OCI-LY7 (cell line): ENCODE measurements at regions of chr1 and their contacts with region 1.

Region 1: GRCh38 chr1:18597160-18598042 is 33.2 kb upstream of the PAX7 start:
- DNase-seq: peak; percentile 51
- H3K4me3 ChIP-seq: no peak overlapping the region
- H3K27ac ChIP-seq: no peak overlapping the region
- H3K4me1 ChIP-seq: no peaks in the 10 kb centered on the region
- CTCF ChIP-seq: peak; percentile 95

Region 2: DNA sequence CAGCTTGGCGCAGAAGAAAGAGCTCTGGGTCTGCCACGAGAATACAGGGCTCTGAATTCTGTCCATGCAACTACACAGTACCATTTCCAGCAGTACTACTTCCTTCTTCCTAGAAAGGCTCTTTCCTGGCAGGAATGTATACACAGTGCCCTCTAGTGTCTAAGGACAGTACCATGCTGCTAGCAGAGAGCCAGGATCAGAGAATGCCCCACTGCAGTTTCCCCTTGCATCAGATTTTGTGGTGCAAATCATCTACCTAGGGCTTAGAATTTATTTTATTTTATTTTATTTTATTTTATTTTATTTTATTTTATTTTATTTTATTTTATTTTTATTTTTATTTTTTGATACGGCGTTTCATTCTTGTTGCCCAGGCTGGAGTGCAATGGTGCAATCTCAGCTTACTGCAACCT is 84.0 kb after region 1 on chr1:
- CTCF ChIA-PET with region 1: no interaction called
- POLR2A ChIA-PET with region 1: no interaction called
- intact Hi-C with region 1: loop called (anchors 1 kb)
- DNase-seq: peak; percentile 76
- H3K4me3 ChIP-seq: no peak overlapping the region
- H3K27ac ChIP-seq: no peak overlapping the region
- H3K4me1 ChIP-seq: peaks cover 3% of the 10 kb centered on the region
- CTCF ChIP-seq: peak; percentile 87

Region 3: DNA sequence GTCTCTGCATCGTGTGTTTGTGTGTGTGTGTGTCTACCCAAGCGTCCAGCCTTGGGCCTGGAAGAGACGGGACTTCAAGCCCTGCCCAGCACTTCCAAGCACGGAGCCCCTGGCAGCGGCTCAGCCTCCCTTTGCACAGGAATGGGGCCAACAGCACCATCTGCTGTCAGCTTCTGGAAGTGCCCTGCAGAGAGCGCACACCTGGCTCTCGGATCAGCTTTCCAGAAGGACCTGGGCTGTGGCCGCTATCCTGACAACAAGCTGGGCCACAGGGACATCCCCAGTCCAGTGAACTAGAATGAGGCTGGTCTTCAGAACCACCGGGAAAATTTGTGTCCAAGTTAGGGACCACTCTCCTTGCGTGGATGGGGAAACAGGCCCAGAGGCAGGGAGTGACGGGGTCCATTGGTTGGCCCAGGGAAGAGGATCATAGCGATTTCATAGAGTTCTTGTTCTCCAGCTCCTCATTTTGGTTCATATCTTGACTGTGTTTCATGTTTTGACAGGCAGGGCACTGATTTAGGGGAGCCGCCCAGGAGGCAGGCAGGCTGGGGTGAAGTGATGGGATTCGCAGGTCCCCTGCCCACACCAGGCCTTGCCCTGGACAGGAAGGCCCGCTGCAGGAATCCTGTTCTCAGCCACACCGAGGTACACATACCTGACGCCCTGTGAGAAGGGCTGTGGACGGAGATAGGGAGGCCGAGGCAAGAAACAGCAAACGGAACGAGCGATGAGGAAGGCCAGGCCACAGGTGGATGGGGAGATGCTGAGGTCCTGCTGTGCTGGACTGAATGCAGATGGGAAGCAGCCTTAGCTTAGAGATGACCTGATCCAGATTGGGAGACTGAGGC is 223.6 kb after region 1 on chr1:
- CTCF ChIA-PET with region 1: interaction called, 3 read pairs
- POLR2A ChIA-PET with region 1: no interaction called
- intact Hi-C with region 1: loop called (anchors 1 kb)
- DNase-seq: peak; percentile 58
- H3K4me3 ChIP-seq: no peak overlapping the region
- H3K27ac ChIP-seq: no peak overlapping the region
- H3K4me1 ChIP-seq: no peaks in the 10 kb centered on the region
- CTCF ChIP-seq: peak; percentile 87

Region 4: DNA sequence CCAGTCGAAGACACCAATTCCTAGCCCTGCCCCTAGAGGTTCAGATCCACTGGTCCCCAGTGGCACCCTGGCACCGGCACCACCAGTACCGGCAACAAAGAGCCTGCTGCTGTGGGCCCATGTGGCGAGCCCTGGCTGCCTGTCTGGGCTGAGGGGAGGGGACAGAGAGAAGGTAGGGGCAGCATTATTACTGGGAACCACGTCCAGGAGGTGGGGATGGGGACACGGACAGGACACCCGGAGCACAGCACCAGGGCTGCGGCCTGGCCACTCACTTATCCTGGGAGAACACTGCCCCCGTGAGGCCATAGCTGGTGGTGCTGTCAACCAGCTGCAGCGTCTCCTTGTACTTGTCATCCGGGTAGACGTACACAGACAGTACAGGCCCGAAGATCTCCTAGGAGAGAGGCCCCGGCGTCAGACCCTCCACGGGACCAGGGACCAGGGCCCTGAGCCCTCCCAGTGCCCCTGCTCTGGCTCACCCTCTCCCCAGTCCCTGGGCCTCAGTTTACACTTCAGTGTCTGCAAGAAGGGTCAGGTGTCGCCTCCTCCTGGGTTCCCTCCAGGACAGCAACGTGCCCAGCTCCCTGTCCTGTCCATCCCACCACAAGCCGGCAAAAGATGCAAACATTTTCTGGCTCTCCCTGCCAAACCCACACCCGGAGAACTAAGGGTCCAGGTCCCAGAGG is 277.9 kb after region 1 on chr1:
- CTCF ChIA-PET with region 1: no interaction called
- POLR2A ChIA-PET with region 1: no interaction called
- intact Hi-C with region 1: loop called (anchors 5 kb)
- DNase-seq: peak; percentile 66
- H3K4me3 ChIP-seq: no peak overlapping the region
- H3K27ac ChIP-seq: no peak overlapping the region
- H3K4me1 ChIP-seq: no peaks in the 10 kb centered on the region
- CTCF ChIP-seq: peak; percentile 83